Activated CD8-positive, alpha-beta memory T cell treated with anti-CD3 and anti-CD28 coated beads, Interleukin-2, amount 10 ng/mL, durations not matched to agents 7 days and 5 days (primary cell): ENCODE measurements at regions of chr3 and their contacts with region 1.

Region 1: GRCh38 chr3:152471814-152472671 is 203.3 kb downstream of the MBNL1 start:
- DNase-seq: peak; percentile 81
- ATAC-seq: peak; percentile 79
- H3K4me3 Mint-ChIP-seq: no peak overlapping the region
- H3K27ac Mint-ChIP-seq: no peak overlapping the region
- H3K4me1 Mint-ChIP-seq: peaks cover 8% of the 10 kb centered on the region
- H3K27me3 Mint-ChIP-seq: peaks cover 3% of the 10 kb centered on the region

Region 2: GRCh38 chr3:152071924-152072323 is 400.1 kb before region 1 on chr3:
- CTCF ChIA-PET with region 1: interaction called, 26 read pairs
- DNase-seq: no peak
- ATAC-seq: peak; percentile 58
- H3K4me3 Mint-ChIP-seq: no peak overlapping the region
- H3K27ac Mint-ChIP-seq: no peak overlapping the region
- H3K4me1 Mint-ChIP-seq: peaks cover 6% of the 10 kb centered on the region
- H3K27me3 Mint-ChIP-seq: no peaks in the 10 kb centered on the region

Region 3: GRCh38 chr3:152298393-152299242 is 173.4 kb before region 1 on chr3:
- CTCF ChIA-PET with region 1: no interaction called
- DNase-seq: peak; percentile 65
- ATAC-seq: peak; percentile 66
- H3K4me3 Mint-ChIP-seq: peak overlapping the region; percentile 67
- H3K27ac Mint-ChIP-seq: peak overlapping the region; percentile 82
- H3K4me1 Mint-ChIP-seq: peaks cover 70% of the 10 kb centered on the region
- H3K27me3 Mint-ChIP-seq: no peaks in the 10 kb centered on the region

Region 4: GRCh38 chr3:152524198-152525140 is 52.4 kb after region 1 on chr3:
- CTCF ChIA-PET with region 1: interaction called, 23 read pairs
- DNase-seq: peak; percentile 60
- ATAC-seq: no peak
- H3K4me3 Mint-ChIP-seq: no peak overlapping the region
- H3K27ac Mint-ChIP-seq: no peak overlapping the region
- H3K4me1 Mint-ChIP-seq: no peaks in the 10 kb centered on the region
- H3K27me3 Mint-ChIP-seq: peaks cover 3% of the 10 kb centered on the region

Region 5: DNA sequence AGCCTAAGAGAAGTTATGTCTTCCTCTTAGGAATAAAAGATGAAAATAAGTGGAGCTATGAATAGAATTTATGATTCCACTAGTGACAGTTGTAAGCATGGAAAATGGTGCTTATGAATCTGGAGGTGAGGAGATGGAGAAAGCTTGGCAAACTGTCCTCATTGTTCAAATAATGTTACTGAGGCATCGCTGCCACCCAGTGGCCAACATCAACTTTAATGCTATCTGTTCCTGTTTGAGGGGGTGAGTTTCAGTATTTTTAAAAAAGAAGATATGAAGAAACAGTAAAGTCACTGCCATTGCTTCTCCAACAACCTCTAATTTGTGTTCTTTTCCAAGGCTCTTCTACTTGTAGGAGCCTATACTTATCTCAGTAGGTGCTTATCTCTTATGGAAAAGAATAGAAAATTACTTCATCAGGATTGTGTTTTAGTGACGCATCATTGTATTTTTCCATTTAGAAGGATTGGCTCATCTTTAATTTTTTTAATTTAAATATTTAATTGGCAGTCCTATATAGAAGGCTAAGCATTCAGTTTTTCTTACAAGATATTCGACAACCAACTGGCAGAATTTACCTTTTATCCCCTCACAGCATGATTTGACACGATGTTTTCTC is 102.5 kb after region 1 on chr3:
- CTCF ChIA-PET with region 1: interaction called, 11 read pairs
- DNase-seq: peak; percentile 53
- ATAC-seq: peak; percentile 42
- H3K4me3 Mint-ChIP-seq: no peak overlapping the region
- H3K27ac Mint-ChIP-seq: no peak overlapping the region
- H3K4me1 Mint-ChIP-seq: no peaks in the 10 kb centered on the region
- H3K27me3 Mint-ChIP-seq: peaks cover 28% of the 10 kb centered on the region